ENCODE measurements at regions of chr4 and their contacts with region 1.

Region 1: DNA sequence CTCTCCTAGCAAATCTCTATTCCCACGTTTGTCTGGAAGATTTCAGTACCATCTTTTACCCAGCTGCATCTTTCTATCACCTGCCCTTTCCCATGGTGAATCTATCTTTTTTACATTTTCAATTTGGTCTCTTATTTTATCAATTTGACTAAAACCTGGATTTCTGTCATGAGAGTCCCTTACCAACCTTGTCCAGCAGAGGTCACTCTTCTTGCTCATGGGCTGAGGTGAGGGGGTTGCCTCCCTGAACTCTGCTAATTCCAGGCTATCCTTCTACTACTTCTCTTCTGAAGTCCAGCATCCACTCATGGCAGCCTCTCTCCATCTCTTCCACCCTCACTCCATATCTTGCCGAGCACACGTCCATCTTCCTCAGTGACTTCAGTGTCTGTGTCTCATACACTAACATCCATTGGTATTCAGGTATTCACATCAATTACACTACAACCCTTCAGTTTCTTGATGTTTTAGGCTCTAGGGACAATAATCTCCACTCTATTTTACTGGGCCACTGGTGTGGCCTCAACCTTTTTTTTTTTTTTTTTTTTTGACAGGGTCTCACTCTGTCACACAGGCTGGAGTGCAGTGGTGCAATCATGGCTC is 17.8 kb upstream of the ZNF827 start:
- DNase-seq: peak; percentile 43
- H3K4me3 ChIP-seq: no peak overlapping the region; a peak in 1 of 4 replicates
- H3K27ac ChIP-seq: no peak overlapping the region
- H3K4me1 ChIP-seq: no peaks in the 10 kb centered on the region
- H3K27me3 ChIP-seq: no peaks in the 10 kb centered on the region
- CTCF ChIP-seq: peak; percentile 86
- EP300 ChIP-seq: no peak
- RAD21 ChIP-seq: peak; percentile 60

Region 2: GRCh38 chr4:145938618-145939440 is 17.6 kb before region 1 on chr4 and contains the start of gene ZNF827:
- CTCF ChIA-PET with region 1: interaction called, 20 read pairs
- POLR2A ChIA-PET with region 1: no interaction called
- DNase-seq: peak; percentile 53
- H3K4me3 ChIP-seq: peak within 1 kb of the TSS; percentile 76 to 89
- H3K27ac ChIP-seq: peak within 1 kb of the TSS; percentile 82 to 97
- H3K4me1 ChIP-seq: peaks cover 18 to 28% of the 10 kb centered on the region in 2 experiments
- H3K27me3 ChIP-seq: no peaks in the 10 kb centered on the region
- CTCF ChIP-seq: no peak
- EP300 ChIP-seq: no peak; a peak in 1 of 4 replicates
- RAD21 ChIP-seq: no peak
- polyA plus RNA-seq, gene ZNF827: 20.9 and 23.2 TPM in 2 replicates

Measured in SK-N-SH (cell line).